Adrenal gland (tissue), 19 donors: ENCODE measurements at regions of chr7 and their contacts with region 1.

Region 1: GRCh38 chr7:92230547-92230946 is 15.2 kb downstream of the KRIT1 start:
- DNase-seq: no peak
- H3K4me3 ChIP-seq: no peak overlapping the region
- H3K27ac ChIP-seq: no peak overlapping the region
- H3K4me1 ChIP-seq: no peaks in the 10 kb centered on the region
- H3K27me3 ChIP-seq: no peaks in the 10 kb centered on the region
- CTCF ChIP-seq: no peak
- POLR2A ChIP-seq: no peak

Region 2: DNA sequence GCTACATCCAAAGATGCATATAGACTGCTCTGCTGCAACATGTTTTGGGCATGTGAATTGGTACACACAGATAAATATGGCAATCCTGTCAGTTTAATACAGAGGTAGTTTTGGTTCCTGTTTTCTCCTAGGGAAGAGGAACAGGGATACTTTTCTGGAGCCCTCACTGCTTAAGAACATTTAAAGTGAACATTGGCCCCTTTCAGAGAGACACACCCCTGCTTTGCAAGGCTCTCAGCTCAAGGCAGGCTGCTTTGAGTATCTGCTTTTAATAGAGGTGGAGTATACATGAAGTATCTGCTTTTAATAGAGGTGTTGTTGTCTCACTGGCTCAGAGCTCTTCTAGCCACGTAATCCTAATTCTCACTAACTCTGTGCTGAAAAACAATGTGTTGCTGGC is 135.2 kb before region 1 on chr7:
- intact Hi-C with region 1: loop called in 1 of 2 experiments (anchors 10 kb)
- DNase-seq: no peak
- H3K4me3 ChIP-seq: no peak overlapping the region
- H3K27ac ChIP-seq: no peak overlapping the region
- H3K4me1 ChIP-seq: no peaks in the 10 kb centered on the region
- H3K27me3 ChIP-seq: no peaks in the 10 kb centered on the region
- CTCF ChIP-seq: no peak
- POLR2A ChIP-seq: no peak